Heart left ventricle (tissue), 16 donors: ENCODE measurements at regions of chr12 and their contacts with region 1.

Region 1: GRCh38 chr12:76348079-76348901 is at the start of gene BBS10:
- DNase-seq: peak; percentile 93 to 95 (median 94)
- ATAC-seq: peak; percentile 95 to 99 (median 98)
- H3K4me3 ChIP-seq: peak within 1 kb of the TSS; percentile 57 to 94 (median 78)
- H3K27ac ChIP-seq: peak within 1 kb of the TSS; percentile 82 to 90 (median 84)
- H3K4me1 ChIP-seq: peaks cover 0 to 42% (median 25%) of the 10 kb centered on the region in 12 donors
- H3K27me3 ChIP-seq: no peaks in the 10 kb centered on the region
- CTCF ChIP-seq: peak in 10 of 12 donors; percentile 14 to 67 (median 42)
- POLR2A ChIP-seq: peak in 1 of 2 donors; percentile 49
- total RNA-seq, gene BBS10: 5.7 to 13.4 (median 9.5) TPM

Region 2: GRCh38 chr12:75526655-75527511 is 821.4 kb before region 1 on chr12:
- intact Hi-C with region 1: loop called in 5 of 10 experiments (anchors 5 to 10 kb)
- DNase-seq: peak in 1 of 5 donors; percentile 28
- ATAC-seq: peak in 2 of 4 donors; percentile 49
- H3K4me3 ChIP-seq: no peak overlapping the region
- H3K27ac ChIP-seq: no peak overlapping the region
- H3K4me1 ChIP-seq: peaks cover 0 to 4% (median 0%) of the 10 kb centered on the region in 12 donors
- H3K27me3 ChIP-seq: no peaks in the 10 kb centered on the region
- CTCF ChIP-seq: peak; percentile 58 to 79 (median 66)
- POLR2A ChIP-seq: no peak

Region 3: GRCh38 chr12:76037130-76038103 is 310.9 kb before region 1 on chr12:
- intact Hi-C with region 1: loop called in 3 of 10 experiments (anchors 5 to 10 kb)
- DNase-seq: peak in 1 of 5 donors; percentile 32
- ATAC-seq: peak; percentile 36 to 74 (median 72)
- H3K4me3 ChIP-seq: no peak overlapping the region
- H3K27ac ChIP-seq: no peak overlapping the region
- H3K4me1 ChIP-seq: peaks cover 0 to 20% (median 10%) of the 10 kb centered on the region in 12 donors
- H3K27me3 ChIP-seq: no peaks in the 10 kb centered on the region
- CTCF ChIP-seq: peak; percentile 74 to 88 (median 82)
- POLR2A ChIP-seq: no peak

Region 4: GRCh38 chr12:76083904-76084862 is 264.1 kb before region 1 on chr12 and contains the start of gene NAP1L1:
- intact Hi-C with region 1: loop called in 9 of 10 experiments (anchors 2 to 10 kb)
- DNase-seq: peak; percentile 98 to 99 (median 99)
- ATAC-seq: peak; percentile 96 to 99 (median 97)
- H3K4me3 ChIP-seq: peak within 1 kb of the TSS; percentile 76 to 97 (median 90)
- H3K27ac ChIP-seq: peak within 1 kb of the TSS; percentile 95 to 100 (median 99)
- H3K4me1 ChIP-seq: peaks cover 0 to 49% (median 28%) of the 10 kb centered on the region in 12 donors
- H3K27me3 ChIP-seq: no peaks in the 10 kb centered on the region
- CTCF ChIP-seq: no peak
- POLR2A ChIP-seq: peak; percentile 26 to 96
- total RNA-seq, gene NAP1L1: 191 to 359 (median 247) TPM

Region 5: GRCh38 chr12:76559400-76560085 is 211.3 kb after region 1 on chr12 and contains the start of gene OSBPL8:
- intact Hi-C with region 1: loop called in 3 of 10 experiments (anchors 5 to 10 kb)
- DNase-seq: peak; percentile 96 to 98 (median 97)
- ATAC-seq: peak; percentile 95 to 98 (median 96)
- H3K4me3 ChIP-seq: peak within 1 kb of the TSS; percentile 63 to 95 (median 88)
- H3K27ac ChIP-seq: peak within 1 kb of the TSS; percentile 80 to 95 (median 92)
- H3K4me1 ChIP-seq: peaks cover 0 to 47% (median 24%) of the 10 kb centered on the region in 12 donors
- H3K27me3 ChIP-seq: no peaks in the 10 kb centered on the region
- CTCF ChIP-seq: peak in 9 of 12 donors; percentile 11 to 62 (median 44)
- POLR2A ChIP-seq: peak in 1 of 2 donors; percentile 90
- total RNA-seq, gene OSBPL8: 27.9 to 58.7 (median 46.4) TPM

Region 6: GRCh38 chr12:76768576-76768975 is 420.3 kb after region 1 on chr12:
- intact Hi-C with region 1: no loop called
- DNase-seq: no peak
- ATAC-seq: no peak
- H3K4me3 ChIP-seq: no peak overlapping the region
- H3K27ac ChIP-seq: no peak overlapping the region
- H3K4me1 ChIP-seq: peaks cover 0 to 60% (median 32%) of the 10 kb centered on the region in 12 donors
- H3K27me3 ChIP-seq: no peaks in the 10 kb centered on the region
- CTCF ChIP-seq: no peak
- POLR2A ChIP-seq: no peak